ENCODE measurements at regions of chr12 and their contacts with region 1.

Region 1: DNA sequence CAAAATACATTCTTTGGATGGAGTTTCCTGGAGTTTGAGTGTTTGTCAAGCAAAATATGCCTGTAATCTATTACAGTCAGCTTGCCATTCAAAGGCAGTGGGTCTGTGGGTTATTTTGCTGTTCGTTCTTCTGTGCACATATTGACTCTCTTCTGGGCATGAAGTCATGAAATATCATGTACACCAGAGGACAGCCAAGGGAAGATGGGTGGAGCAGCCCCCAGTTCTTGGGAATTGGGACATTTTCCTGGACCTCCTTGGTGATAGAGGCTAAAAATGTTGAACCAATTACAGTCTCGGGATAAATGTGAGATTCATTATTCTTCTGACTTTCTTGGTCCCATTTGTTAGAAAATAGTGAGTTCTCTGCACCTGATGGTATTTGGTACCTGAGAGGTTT is 89.1 kb downstream of the FOXN4 start:
- DNase-seq: no peak
- ATAC-seq: no peak

Region 2: DNA sequence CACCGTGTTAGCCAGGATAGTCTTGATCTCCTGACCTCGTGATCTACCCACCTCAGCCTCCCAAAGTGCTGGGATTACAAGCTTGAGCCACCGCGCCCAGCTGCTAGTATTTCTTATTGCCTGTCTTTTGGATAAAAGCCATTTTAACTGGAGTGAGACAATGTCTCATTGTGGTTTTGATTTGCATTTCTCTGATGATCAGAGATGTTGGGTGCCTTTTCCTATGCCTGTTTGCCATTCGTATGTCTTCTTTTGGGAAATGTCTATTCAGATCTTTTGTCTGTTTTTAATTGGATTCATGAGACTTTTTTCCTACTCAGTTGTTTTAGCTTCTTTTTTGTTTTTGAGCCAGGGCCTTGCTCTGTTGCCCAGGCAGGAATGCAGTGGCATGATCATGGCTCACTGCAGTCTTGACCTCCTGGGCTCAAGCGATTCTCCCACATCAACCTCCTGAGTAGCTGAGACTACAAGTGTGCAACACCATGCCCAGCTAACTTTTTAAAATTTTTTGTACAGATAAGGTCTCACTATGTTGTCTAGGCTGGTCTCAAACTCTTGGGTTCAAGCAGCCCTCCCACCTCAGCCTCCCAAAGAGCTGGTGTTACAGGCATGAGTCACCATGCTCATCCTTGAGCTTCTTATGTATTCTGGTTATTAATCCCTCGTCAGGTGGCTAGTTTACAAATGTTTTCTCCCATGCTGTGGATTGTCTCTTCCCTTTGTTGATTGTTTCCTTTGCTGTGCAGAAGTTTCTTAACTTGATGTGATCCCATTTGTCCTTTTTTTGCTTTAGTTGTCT is 37.7 kb before region 1 on chr12:
- intact Hi-C with region 1: loop called in 1 of 2 experiments (anchors 5 kb)
- DNase-seq: no peak
- ATAC-seq: no peak

Measured in left cardiac atrium (tissue), 4 donors.